ENCODE measurements at regions of chr9 and their contacts with region 1.

Region 1: GRCh38 chr9:70043689-70044489 is at the start of gene MAMDC2:
- DNase-seq: peak; percentile 57
- H3K4me3 ChIP-seq: peak within 1 kb of the TSS; percentile 46 to 61 (median 60)
- H3K27ac ChIP-seq: peak within 1 kb of the TSS; percentile 20
- H3K4me1 ChIP-seq: peaks cover 60% of the 10 kb centered on the region
- H3K27me3 ChIP-seq: no peaks in the 10 kb centered on the region
- CTCF ChIP-seq: no peak
- total RNA-seq, gene MAMDC2: 8.3 to 33.5 TPM

Region 2: GRCh38 chr9:69546265-69546664 is 497.6 kb before region 1 on chr9:
- CTCF ChIA-PET with region 1: no interaction called
- dilution Hi-C with region 1: no loop called
- in situ Hi-C with region 1: no loop called
- intact Hi-C with region 1: no loop called
- DNase-seq: no peak
- H3K4me3 ChIP-seq: no peak overlapping the region
- H3K27ac ChIP-seq: no peak overlapping the region
- H3K4me1 ChIP-seq: no peaks in the 10 kb centered on the region
- H3K27me3 ChIP-seq: peaks cover 11% of the 10 kb centered on the region
- CTCF ChIP-seq: peak; percentile 19 to 39

Region 3: DNA sequence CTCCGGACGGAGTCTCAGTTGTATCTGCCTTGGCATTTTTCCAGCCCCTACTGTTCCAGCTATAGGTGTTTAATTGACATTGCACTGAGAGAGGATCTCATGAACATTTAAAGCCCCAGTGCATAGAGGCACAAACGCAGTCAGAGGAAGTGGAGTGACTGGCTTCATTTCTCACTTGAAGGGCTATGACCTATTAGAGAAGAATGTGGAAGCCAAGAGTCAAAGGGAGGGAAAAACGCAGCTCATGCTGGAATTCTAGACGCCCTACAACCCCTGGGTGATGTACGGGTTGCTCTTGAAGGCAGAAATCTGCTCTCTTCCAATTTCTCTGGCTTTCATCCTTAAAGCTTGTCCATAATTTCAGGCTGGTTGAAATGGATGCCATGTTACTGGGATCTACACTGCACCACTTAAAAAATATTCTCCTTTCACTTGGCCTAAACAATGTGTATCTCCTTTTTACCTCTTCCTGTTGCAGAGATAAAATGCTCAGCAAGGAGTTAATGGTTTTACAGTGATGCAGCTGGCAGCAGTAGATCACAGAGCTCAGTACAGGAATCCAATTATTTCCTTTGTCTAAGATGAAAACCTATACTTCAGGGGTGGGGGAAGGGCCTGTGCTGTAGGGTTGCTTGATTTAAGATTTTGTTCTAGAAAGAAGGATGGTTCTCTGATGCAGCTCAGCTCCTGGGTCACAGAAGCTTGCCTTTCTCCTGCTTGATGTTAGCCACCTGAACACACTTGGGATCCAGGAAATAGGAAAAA is 62.0 kb before region 1 on chr9:
- CTCF ChIA-PET with region 1: no interaction called
- dilution Hi-C with region 1: loop called (anchors 5 kb)
- in situ Hi-C with region 1: no loop called
- intact Hi-C with region 1: no loop called
- DNase-seq: no peak
- H3K4me3 ChIP-seq: no peak overlapping the region
- H3K27ac ChIP-seq: no peak overlapping the region
- H3K4me1 ChIP-seq: peaks cover 8% of the 10 kb centered on the region
- H3K27me3 ChIP-seq: no peaks in the 10 kb centered on the region
- CTCF ChIP-seq: no peak

Region 4: DNA sequence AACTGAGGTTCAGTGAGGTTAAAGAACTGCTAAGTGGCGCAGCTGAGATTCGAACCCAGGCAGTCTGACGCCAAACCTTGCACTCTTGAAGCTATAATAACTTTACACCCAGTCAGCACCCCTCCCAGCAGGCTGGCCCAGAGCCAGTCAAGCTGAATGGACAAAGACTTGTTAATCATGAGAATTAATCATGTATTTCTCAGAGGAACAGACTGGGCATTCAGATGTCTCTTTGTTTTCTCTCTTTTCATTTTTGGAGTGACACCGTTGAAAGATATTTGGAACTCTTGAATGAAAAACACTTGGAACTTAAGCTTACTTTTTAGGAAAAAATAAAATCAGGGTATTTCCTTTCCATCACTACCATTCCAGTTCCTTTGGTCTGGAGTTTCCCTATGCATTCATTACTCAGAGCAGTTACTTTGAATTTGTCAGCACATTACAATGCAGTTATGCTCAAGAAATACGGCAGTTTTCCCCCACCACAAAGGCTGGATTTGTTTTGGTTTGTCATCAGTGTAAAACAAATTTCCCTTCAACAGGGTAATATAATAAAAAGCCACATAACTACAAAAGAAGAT is 22.8 kb before region 1 on chr9:
- CTCF ChIA-PET with region 1: no interaction called
- dilution Hi-C with region 1: no loop called
- in situ Hi-C with region 1: no loop called
- intact Hi-C with region 1: loop called (anchors 2 kb)
- DNase-seq: peak; percentile 95
- H3K4me3 ChIP-seq: no peak overlapping the region
- H3K27ac ChIP-seq: peak overlapping the region; percentile 95
- H3K4me1 ChIP-seq: peaks cover 28% of the 10 kb centered on the region
- H3K27me3 ChIP-seq: no peaks in the 10 kb centered on the region
- CTCF ChIP-seq: no peak

Region 5: GRCh38 chr9:70080481-70081119 is 36.7 kb after region 1 on chr9:
- CTCF ChIA-PET with region 1: no interaction called
- dilution Hi-C with region 1: no loop called
- in situ Hi-C with region 1: no loop called
- intact Hi-C with region 1: loop called (anchors 5 kb)
- DNase-seq: peak; percentile 35
- H3K4me3 ChIP-seq: no peak overlapping the region
- H3K27ac ChIP-seq: peak overlapping the region; percentile 17
- H3K4me1 ChIP-seq: peaks cover 28% of the 10 kb centered on the region
- H3K27me3 ChIP-seq: no peaks in the 10 kb centered on the region
- CTCF ChIP-seq: no peak

Region 6: GRCh38 chr9:70111042-70111602 is 67.2 kb after region 1 on chr9:
- CTCF ChIA-PET with region 1: interaction called, 7 read pairs
- dilution Hi-C with region 1: no loop called
- in situ Hi-C with region 1: loop called in 1 of 2 experiments (anchors 10 kb)
- intact Hi-C with region 1: loop called (anchors 2 kb)
- DNase-seq: peak; percentile 57
- H3K4me3 ChIP-seq: no peak overlapping the region
- H3K27ac ChIP-seq: peak overlapping the region; percentile 58
- H3K4me1 ChIP-seq: peaks cover 56% of the 10 kb centered on the region
- H3K27me3 ChIP-seq: no peaks in the 10 kb centered on the region
- CTCF ChIP-seq: peak; percentile 89 to 91

Measured in mammary epithelial cell (primary cell).